ENCODE measurements at regions of chr5 and their contacts with region 1.

Region 1: GRCh38 chr5:133051580-133052332 is at the start of gene HSPA4:
- DNase-seq: peak; percentile 97

Region 2: DNA sequence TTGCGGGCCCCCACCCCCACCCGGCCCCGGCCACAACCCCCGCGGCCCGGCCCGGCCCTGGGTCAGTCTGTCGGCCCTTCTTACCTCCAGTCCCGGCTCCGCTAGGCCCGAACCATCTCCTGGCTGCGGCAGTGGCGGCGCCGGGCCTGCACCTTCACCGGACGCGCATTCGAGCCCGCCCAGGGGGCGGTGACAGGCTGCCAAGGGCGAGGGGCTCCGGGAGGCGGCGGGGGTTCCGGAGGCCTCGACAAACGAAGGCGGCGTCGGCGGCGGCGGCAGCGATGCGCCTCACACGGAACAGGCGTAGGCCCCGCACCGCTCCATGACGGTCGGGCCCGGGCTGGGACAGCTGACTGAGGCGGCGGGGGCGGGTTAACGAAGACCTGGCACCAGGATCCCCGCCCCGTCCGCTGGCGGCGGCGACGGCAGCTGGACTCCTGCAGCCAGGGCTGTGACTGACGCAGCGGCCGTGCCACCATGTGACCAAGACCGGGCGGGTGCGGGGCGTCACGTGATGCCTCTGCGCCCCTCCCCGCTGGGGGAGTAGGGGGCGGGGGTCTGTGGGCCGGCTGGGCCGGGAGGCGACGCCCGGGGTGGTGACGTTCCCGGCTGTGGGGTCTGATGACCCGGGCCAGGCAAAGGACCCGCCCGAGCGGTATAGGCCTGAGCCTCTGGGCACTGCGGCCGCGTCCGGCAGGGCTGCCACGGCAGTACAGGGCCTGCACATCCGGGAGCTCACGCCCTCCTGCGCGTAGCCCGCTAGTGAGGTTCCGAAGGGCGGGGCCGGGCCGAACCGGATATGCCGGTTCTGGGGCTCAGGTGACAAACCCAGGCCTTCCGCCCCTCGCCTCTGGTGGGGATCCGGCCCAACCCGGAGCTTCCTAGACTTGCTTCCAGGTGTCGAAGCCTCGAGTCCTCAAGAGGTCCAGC is 88.3 kb before region 1 on chr5 and contains the start of gene AFF4:
- CTCF ChIA-PET with region 1: no interaction called
- POLR2A ChIA-PET with region 1: interaction called, 35 read pairs
- DNase-seq: peak; percentile 93

Region 3: DNA sequence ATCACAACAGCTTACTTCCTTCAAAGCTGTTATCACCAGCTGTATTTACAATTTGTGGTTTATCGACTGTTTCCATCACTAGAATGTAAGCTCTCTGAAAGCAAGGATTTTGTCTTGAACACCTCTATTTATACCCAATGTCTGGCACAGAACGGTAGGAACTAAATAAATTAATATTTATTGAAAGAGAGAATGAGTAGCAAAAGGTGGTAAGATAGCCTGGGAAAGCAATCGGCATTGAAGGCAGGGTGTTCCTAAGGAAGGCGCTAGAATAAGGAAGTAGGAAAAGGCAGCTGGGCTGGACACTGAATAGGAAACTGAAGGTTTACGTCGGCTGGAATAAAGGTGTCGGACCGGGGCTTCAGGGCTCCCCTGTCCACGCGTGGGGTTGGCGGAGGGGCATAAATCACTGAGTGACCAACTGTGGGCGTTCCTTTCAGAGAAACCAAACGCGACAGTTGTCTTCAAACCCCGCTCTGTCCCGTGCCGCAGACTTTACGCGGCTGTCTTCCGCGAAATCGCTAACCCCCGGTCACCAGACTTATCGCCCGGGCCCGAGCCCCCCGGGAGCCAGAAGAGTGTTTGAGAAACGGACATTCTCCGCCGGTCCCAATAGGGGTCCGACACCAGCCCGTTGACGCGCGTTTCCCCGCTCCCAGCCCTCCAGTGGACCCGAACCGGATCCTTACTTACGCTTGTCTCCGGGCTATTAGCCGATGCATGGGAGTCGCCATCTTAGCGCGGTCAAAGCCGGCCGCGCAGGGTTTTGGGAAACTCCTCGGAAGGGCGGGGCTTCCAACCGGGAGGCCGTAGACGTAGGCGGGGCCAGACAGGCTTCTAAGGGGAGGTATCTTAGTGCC is 25.7 kb before region 1 on chr5 and contains the start of gene ZCCHC10:
- CTCF ChIA-PET with region 1: no interaction called
- POLR2A ChIA-PET with region 1: interaction called, 50 read pairs
- DNase-seq: peak; percentile 94

Region 4: DNA sequence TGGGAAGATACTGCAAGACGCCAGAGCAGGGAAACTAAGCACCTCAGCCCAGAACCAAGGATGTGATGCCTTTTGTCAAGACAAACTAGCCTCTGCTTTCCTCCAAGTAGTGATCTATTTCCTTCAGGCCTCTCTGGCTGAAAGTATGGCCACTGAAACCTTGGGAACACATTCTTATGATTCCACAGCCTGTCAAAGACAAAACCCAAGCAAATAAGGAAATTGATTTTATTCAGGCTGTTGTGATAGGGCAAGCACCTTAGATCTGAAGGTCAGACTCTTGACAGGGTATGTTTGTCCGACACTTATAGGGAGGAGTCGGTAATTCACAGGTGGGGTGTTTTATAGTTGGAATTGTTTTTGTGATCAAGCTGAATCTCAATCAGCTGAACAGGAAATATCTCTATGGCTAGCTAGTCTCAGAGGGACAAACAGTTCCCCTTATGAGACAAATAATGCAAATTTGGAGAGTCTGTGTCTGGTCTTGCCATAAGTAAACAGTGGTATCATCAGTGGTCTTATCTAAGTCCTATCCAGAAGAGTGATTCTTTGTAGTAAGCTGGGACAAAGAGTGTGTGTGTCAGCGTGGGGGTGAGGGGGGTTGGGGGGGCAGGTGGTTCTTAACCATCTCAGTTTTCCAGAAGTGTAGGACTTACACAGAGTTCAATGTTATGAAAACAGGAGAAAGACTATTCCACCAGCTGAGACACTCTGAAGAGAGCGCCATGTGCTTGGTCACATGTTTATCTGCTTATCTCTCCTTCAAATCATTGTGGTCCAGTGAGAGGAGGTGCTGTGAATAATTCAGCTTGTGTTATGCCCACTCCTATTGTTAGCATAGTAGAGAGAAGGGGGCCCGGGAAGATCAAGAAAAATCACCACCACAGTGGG is 18.7 kb before region 1 on chr5:
- CTCF ChIA-PET with region 1: interaction called, 3 read pairs
- POLR2A ChIA-PET with region 1: interaction called, 50 read pairs
- DNase-seq: no peak

Region 5: GRCh38 chr5:133091034-133091433 is 39.3 kb after region 1 on chr5:
- CTCF ChIA-PET with region 1: no interaction called
- POLR2A ChIA-PET with region 1: no interaction called
- DNase-seq: no peak

Region 6: GRCh38 chr5:133164759-133165158 is 113.0 kb after region 1 on chr5:
- CTCF ChIA-PET with region 1: no interaction called
- POLR2A ChIA-PET with region 1: no interaction called
- DNase-seq: no peak